CD8-positive, alpha-beta T cell (primary cell): ENCODE measurements at regions of chr19 and their contacts with region 1.

Region 1: GRCh38 chr19:13093407-13094105 is 9.1 kb downstream of the LYL1 start:
- DNase-seq: peak; percentile 55 to 88 (median 80)
- ATAC-seq: peak; percentile 74
- H3K4me3 ChIP-seq: no peak overlapping the region
- H3K4me3 Mint-ChIP-seq: no peak overlapping the region
- H3K27ac ChIP-seq: no peak overlapping the region
- H3K27ac Mint-ChIP-seq: no peak overlapping the region
- H3K4me1 ChIP-seq: peaks cover 29% of the 10 kb centered on the region
- H3K4me1 Mint-ChIP-seq: peaks cover 18% of the 10 kb centered on the region
- H3K27me3 ChIP-seq: peaks cover 16 to 28% of the 10 kb centered on the region in 2 experiments
- H3K27me3 Mint-ChIP-seq: peaks cover 21% of the 10 kb centered on the region
- CTCF ChIP-seq: peak; percentile 92

Region 2: DNA sequence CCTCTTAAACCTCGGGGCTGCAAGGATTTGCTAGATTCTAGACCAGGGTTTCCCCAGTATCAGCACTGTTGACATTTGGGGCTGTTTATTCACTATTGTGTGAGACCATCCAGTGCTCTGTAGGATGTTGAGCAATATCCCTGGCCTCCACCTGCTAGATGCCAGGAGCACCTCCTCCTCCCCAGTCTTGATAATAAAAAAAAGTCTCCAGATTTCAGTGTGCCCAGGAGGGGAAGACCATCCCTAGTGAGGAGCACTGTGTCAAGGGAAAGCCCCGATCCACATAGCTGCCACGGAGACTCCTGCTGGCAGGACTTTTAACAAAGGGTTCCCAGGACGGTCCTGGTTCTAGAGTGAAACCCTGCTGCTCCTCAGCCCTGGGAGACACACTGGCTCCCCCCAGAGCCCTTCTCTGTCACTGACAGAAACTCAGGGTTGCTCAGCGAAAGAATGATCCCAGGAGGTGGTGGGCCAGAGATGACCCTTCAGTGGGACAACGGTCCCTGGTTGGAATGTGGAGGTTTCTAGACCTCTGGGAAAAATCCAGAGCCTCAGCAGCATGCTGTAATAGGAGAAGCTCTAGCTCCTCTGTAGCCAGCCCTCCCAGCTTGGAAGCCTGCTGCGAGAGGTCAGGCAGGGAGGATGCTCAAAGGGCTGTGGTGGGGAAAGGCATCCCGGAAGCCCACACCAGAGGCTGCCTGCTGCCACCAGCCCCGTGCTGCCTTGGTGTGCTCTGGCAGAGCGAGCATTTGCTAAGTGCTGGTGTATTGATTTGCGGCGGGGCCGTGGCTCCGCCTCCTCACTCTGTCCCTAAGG is 11.2 kb before region 1 on chr19:
- CTCF ChIA-PET with region 1: interaction called, 15 read pairs
- POLR2A ChIA-PET with region 1: no interaction called
- intact Hi-C with region 1: no loop called
- DNase-seq: no peak
- ATAC-seq: no peak
- H3K4me3 ChIP-seq: no peak overlapping the region
- H3K4me3 Mint-ChIP-seq: no peak overlapping the region
- H3K27ac ChIP-seq: no peak overlapping the region
- H3K27ac Mint-ChIP-seq: no peak overlapping the region
- H3K4me1 ChIP-seq: no peaks in the 10 kb centered on the region
- H3K4me1 Mint-ChIP-seq: peaks cover 2% of the 10 kb centered on the region
- H3K27me3 ChIP-seq: no peaks in the 10 kb centered on the region
- H3K27me3 Mint-ChIP-seq: no peaks in the 10 kb centered on the region
- CTCF ChIP-seq: no peak

Region 3: GRCh38 chr19:13104360-13104847 is 10.8 kb after region 1 on chr19:
- CTCF ChIA-PET with region 1: interaction called, 27 read pairs
- POLR2A ChIA-PET with region 1: interaction called, 10 read pairs
- intact Hi-C with region 1: no loop called
- DNase-seq: peak in 8 of 9 experiments; percentile 53 to 79 (median 70)
- ATAC-seq: peak; percentile 64
- H3K4me3 ChIP-seq: peak overlapping the region; percentile 59 to 81
- H3K4me3 Mint-ChIP-seq: peak overlapping the region; percentile 89
- H3K27ac ChIP-seq: peak overlapping the region; percentile 60 to 63
- H3K27ac Mint-ChIP-seq: peak overlapping the region; percentile 87
- H3K4me1 ChIP-seq: peaks cover 51% of the 10 kb centered on the region
- H3K4me1 Mint-ChIP-seq: peaks cover 34% of the 10 kb centered on the region
- H3K27me3 ChIP-seq: no peaks in the 10 kb centered on the region
- H3K27me3 Mint-ChIP-seq: no peaks in the 10 kb centered on the region
- CTCF ChIP-seq: peak; percentile 92

Region 4: GRCh38 chr19:13117772-13118423 is 24.3 kb after region 1 on chr19 and contains the start of gene NACC1:
- CTCF ChIA-PET with region 1: no interaction called
- POLR2A ChIA-PET with region 1: no interaction called
- intact Hi-C with region 1: no loop called
- DNase-seq: peak; percentile 81 to 93 (median 87)
- ATAC-seq: peak; percentile 82
- H3K4me3 ChIP-seq: peak within 1 kb of the TSS; percentile 65 to 78
- H3K4me3 Mint-ChIP-seq: peak within 1 kb of the TSS; percentile 98
- H3K27ac ChIP-seq: peak within 1 kb of the TSS; percentile 41 to 61
- H3K27ac Mint-ChIP-seq: peak within 1 kb of the TSS; percentile 96
- H3K4me1 ChIP-seq: peaks cover 35% of the 10 kb centered on the region
- H3K4me1 Mint-ChIP-seq: peaks cover 60% of the 10 kb centered on the region
- H3K27me3 ChIP-seq: no peaks in the 10 kb centered on the region
- H3K27me3 Mint-ChIP-seq: no peaks in the 10 kb centered on the region
- CTCF ChIP-seq: no peak
- total RNA-seq, gene NACC1: 16.8 to 20.8 TPM